ENCODE measurements at regions of chr4 and their contacts with region 1.

Region 1: DNA sequence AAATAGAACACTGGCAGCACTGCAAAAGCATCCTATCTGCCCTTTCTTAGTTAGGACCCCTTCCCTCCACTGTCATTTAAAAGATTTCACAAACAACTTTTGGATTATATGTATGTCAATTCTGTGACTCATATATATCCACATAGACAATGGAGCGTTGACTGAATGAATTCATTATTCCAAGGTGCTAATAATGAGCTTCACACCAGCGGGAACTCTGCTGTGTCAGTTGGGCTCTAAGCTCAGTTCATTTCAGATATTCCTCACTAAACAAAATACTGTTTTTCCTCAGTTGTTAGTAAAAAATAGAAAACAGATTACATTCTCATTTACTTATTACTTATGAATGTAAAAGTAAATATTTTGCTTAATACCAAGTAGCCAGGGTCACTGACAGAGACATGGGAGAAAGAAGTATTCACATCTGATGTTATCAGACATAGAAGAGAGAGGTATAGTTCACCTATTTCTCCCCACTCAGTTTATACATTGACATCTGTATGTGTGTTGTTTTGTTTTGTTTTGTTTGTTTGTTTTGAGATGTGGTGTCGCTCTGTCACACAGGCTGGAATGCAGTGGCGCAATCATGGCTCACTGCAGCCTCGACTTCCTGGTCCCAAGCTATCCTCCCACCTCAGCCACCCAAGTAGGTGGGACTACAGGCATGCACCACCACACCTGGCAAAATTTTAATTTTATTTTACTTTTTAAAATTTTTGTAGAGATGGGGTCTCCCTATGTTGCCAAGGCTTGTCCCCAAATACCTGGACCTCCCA is 10.9 kb downstream of the NFKB1 start:
- DNase-seq: no peak
- ATAC-seq: peak in 1 of 4 experiments; percentile 18
- H3K4me3 ChIP-seq: no peak overlapping the region
- H3K4me3 Mint-ChIP-seq: no peak overlapping the region
- H3K27ac ChIP-seq: no peak overlapping the region
- H3K27ac Mint-ChIP-seq: no peak overlapping the region
- H3K4me1 ChIP-seq: peaks cover 3 to 8% of the 10 kb centered on the region in 2 experiments
- H3K4me1 Mint-ChIP-seq: peaks cover 60 to 71% (median 61%) of the 10 kb centered on the region in 3 donors
- H3K27me3 ChIP-seq: no peaks in the 10 kb centered on the region
- H3K27me3 Mint-ChIP-seq: no peaks in the 10 kb centered on the region

Region 2: DNA sequence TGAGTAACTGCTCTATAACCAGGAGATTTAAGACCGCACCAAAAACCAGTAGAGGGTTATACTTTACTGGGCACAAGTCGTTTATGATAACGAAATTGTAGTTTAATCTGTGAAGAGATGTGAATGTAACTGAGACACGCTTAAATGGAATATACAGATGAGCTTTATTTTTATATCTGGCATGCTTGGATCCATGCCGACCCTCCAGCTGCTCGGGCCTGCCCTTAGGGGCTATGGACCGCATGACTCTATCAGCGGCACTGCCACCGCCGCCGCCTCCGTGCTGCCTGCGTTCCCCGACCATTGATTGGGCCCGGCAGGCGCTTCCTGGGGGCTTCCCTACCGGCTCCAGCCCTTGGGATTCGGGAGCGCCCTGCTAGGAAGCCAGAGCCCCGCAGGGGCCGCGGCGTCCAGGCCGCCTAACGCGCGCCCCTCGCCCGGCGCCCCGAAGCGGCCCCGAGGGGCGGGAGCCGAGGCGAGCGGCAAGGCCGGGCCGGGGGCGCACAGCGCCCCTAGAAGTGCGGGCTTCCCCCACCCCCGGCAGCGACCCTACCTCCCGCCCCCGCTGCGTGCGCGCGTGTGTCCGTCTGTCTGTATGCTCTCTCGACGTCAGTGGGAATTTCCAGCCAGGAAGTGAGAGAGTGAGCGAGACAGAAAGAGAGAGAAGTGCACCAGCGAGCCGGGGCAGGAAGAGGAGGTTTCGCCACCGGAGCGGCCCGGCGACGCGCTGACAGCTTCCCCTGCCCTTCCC is 11.1 kb before region 1 on chr4 and contains the start of gene NFKB1:
- CTCF ChIA-PET with region 1: interaction called in 1 of 2 experiments, 3 read pairs
- POLR2A ChIA-PET with region 1: interaction called, 6 to 13 read pairs
- DNase-seq: peak; percentile 41 to 94 (median 84)
- ATAC-seq: peak; percentile 62 to 79 (median 66)
- H3K4me3 ChIP-seq: peak within 1 kb of the TSS; percentile 99
- H3K4me3 Mint-ChIP-seq: peak within 1 kb of the TSS; percentile 91 to 98 (median 96)
- H3K27ac ChIP-seq: peak within 1 kb of the TSS; percentile 100
- H3K27ac Mint-ChIP-seq: peak within 1 kb of the TSS; percentile 95 to 98
- H3K4me1 ChIP-seq: peaks cover 13 to 27% of the 10 kb centered on the region in 2 experiments
- H3K4me1 Mint-ChIP-seq: peaks cover 25 to 30% (median 30%) of the 10 kb centered on the region in 3 donors
- H3K27me3 ChIP-seq: no peaks in the 10 kb centered on the region
- H3K27me3 Mint-ChIP-seq: no peaks in the 10 kb centered on the region
- total RNA-seq, gene NFKB1: 83.0 to 185 (median 92.1) TPM